ENCODE measurements at regions of chr1 and their contacts with region 1.

Region 1: GRCh38 chr1:85464497-85465098 is 361 bp downstream of the DDAH1 start:
- DNase-seq: no peak
- H3K4me3 Mint-ChIP-seq: peak overlapping the region; percentile 6
- H3K27ac Mint-ChIP-seq: no peak overlapping the region
- H3K4me1 Mint-ChIP-seq: no peaks in the 10 kb centered on the region
- H3K27me3 Mint-ChIP-seq: peaks cover 63% of the 10 kb centered on the region

Region 2: GRCh38 chr1:85137684-85138111 is 326.9 kb before region 1 on chr1:
- intact Hi-C with region 1: no loop called
- DNase-seq: no peak
- H3K4me3 Mint-ChIP-seq: no peak overlapping the region
- H3K27ac Mint-ChIP-seq: no peak overlapping the region
- H3K4me1 Mint-ChIP-seq: no peaks in the 10 kb centered on the region
- H3K27me3 Mint-ChIP-seq: peaks cover 1% of the 10 kb centered on the region

Region 3: GRCh38 chr1:85576642-85577418 is 112.2 kb after region 1 on chr1:
- intact Hi-C with region 1: loop called (anchors 2 kb)
- DNase-seq: peak; percentile 47
- H3K4me3 Mint-ChIP-seq: peak overlapping the region; percentile 71
- H3K27ac Mint-ChIP-seq: no peak overlapping the region
- H3K4me1 Mint-ChIP-seq: peaks cover 19% of the 10 kb centered on the region
- H3K27me3 Mint-ChIP-seq: peaks cover 73% of the 10 kb centered on the region